OCI-LY7 (cell line): ENCODE measurements at regions of chr11 and their contacts with region 1.

Region 1: DNA sequence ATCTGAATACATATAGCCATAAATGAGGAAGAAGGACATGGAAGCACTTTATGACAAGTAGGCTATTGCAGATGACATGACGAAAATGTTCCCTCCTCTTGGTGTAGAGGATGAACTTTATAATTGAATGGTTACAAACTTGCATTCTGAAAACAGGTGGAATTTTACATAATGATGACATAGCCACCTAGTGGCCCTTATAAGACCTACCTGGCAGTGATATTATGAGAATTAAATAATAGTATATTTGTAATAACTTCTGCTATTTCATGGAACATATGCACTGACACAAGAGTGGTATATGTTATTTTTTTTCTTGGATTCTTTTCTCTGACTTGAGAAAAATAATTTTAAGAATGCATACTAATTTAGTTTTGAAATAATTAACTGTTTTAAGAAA is 22.9 kb downstream of the TRIM22 start:
- DNase-seq: peak; percentile 62
- H3K4me3 ChIP-seq: no peak overlapping the region
- H3K27ac ChIP-seq: no peak overlapping the region
- H3K4me1 ChIP-seq: no peaks in the 10 kb centered on the region
- CTCF ChIP-seq: peak; percentile 84

Region 2: DNA sequence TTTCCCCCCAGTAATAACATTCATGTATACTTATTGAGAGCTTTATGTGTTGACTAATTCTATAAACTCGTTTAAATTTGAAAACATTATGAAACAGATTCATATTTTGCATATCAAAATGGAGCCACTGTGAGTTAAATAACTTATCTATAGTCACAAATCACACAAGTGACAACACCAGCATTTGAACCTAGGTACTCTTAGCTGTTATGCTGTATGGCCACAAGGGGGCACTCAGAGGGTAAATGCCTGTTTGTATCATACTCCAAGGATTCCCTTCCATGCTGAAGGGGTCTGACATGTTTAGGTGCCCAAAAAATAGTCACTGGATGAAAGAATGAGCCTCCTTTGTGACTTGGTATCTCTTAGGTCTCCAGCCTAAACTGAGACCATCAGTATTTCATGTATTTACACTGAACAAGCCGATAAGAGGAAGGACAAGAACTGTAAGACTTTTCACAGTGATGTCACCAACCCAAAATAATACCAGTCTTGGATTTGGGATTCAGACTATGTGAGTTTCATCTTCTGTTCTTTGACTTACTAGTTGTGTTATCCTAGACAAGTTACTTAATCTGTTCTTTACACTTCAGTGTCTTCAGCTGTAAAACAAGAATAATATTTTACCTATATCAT is 236.2 kb before region 1 on chr11:
- CTCF ChIA-PET with region 1: no interaction called
- POLR2A ChIA-PET with region 1: no interaction called
- intact Hi-C with region 1: loop called (anchors 10 kb)
- DNase-seq: peak; percentile 60
- H3K4me3 ChIP-seq: no peak overlapping the region
- H3K27ac ChIP-seq: no peak overlapping the region
- H3K4me1 ChIP-seq: no peaks in the 10 kb centered on the region
- CTCF ChIP-seq: peak; percentile 94

Region 3: GRCh38 chr11:5600374-5600851 is 112.1 kb before region 1 on chr11:
- CTCF ChIA-PET with region 1: interaction called, 4 read pairs
- POLR2A ChIA-PET with region 1: no interaction called
- intact Hi-C with region 1: loop called (anchors 2 kb)
- DNase-seq: peak; percentile 82
- H3K4me3 ChIP-seq: no peak overlapping the region
- H3K27ac ChIP-seq: no peak overlapping the region
- H3K4me1 ChIP-seq: no peaks in the 10 kb centered on the region
- CTCF ChIP-seq: peak; percentile 91

Region 4: GRCh38 chr11:5746614-5747013 is 34.1 kb after region 1 on chr11:
- CTCF ChIA-PET with region 1: no interaction called
- POLR2A ChIA-PET with region 1: no interaction called
- intact Hi-C with region 1: no loop called
- DNase-seq: no peak
- H3K4me3 ChIP-seq: no peak overlapping the region
- H3K27ac ChIP-seq: no peak overlapping the region
- H3K4me1 ChIP-seq: no peaks in the 10 kb centered on the region
- CTCF ChIP-seq: no peak